PC-3 (cell line): ENCODE measurements at regions of chr9 and their contacts with region 1.

Region 1: GRCh38 chr9:35258676-35259474 is 97.1 kb downstream of the UNC13B start:
- DNase-seq: peak; percentile 66
- ATAC-seq: peak; percentile 53
- H3K4me3 ChIP-seq: no peak overlapping the region
- H3K27ac ChIP-seq: no peak overlapping the region
- H3K4me1 ChIP-seq: no peaks in the 10 kb centered on the region
- H3K27me3 ChIP-seq: no peaks in the 10 kb centered on the region
- CTCF ChIP-seq: peak; percentile 75

Region 2: DNA sequence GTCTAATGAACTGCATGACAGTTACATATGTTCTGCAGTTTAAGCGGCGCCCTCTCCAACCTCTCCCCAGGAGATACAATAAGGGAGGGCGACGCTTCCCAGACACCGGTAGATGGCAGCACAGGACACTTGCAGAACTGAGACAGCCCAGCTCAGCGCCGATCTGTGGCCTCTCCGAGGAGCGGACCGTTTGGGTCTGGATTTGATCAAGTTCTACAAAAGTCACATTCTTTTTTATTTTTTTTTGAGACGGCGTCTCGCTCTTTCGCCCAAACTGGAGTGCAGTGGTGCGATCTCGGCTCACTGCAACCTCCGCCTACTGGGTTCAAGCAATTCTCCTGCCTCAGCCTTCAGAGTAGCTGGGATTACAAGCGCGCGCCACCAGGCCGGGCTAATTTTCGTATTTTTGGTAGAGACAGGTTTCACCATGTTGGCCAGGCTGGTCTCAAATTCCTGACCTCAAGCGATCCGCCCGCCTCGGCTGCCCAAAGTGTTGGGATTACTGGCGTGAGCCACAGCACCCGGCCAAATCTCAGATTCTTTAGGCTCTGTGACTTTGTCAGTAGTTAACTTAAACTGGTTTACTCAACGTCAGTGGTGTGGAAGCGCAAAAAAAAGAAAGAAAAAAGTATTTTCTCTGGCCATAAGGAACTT is 141.8 kb before region 1 on chr9:
- CTCF ChIA-PET with region 1: interaction called, 11 read pairs
- POLR2A ChIA-PET with region 1: no interaction called
- intact Hi-C with region 1: loop called (anchors 1 kb)
- DNase-seq: peak; percentile 89
- ATAC-seq: peak; percentile 53
- H3K4me3 ChIP-seq: peak overlapping the region; percentile 83
- H3K27ac ChIP-seq: peak overlapping the region; percentile 36
- H3K4me1 ChIP-seq: peaks cover 32% of the 10 kb centered on the region
- H3K27me3 ChIP-seq: no peaks in the 10 kb centered on the region
- CTCF ChIP-seq: peak; percentile 87

Region 3: GRCh38 chr9:35414889-35415288 is 156.0 kb after region 1 on chr9:
- CTCF ChIA-PET with region 1: interaction called, 10 read pairs
- POLR2A ChIA-PET with region 1: no interaction called
- intact Hi-C with region 1: no loop called
- DNase-seq: no peak
- ATAC-seq: no peak
- H3K4me3 ChIP-seq: no peak overlapping the region
- H3K27ac ChIP-seq: no peak overlapping the region
- H3K4me1 ChIP-seq: no peaks in the 10 kb centered on the region
- H3K27me3 ChIP-seq: no peaks in the 10 kb centered on the region
- CTCF ChIP-seq: no peak

Region 4: DNA sequence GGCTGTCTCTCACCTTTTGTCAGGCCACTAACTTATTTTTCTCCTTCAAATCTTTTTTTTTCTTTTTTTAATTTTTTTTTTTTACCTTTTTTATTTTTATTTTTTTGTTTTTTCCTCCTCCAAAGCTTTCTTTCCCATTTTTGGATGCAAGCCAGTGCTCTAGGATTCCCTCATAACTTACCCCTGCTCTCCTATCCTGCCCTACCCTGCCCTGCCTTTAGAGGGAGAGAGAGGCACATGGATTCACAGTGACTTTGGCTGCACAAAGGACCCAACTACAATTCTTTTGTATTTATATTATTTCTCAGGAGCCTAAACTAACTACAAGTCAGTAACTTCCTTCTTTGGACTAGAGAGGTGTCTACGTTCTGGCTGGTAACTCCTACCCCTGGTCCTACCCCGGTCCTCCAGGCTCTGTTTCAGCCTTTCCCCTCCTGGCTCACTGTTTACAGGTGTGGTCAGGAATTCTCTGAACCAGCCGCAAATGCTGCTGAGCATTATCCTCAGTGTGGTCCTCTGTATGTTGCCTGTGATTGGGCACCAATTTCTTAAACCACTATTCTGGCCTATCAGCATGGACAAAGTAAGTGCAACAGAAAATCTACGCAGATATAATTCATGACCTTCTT is 222.6 kb after region 1 on chr9:
- CTCF ChIA-PET with region 1: no interaction called
- POLR2A ChIA-PET with region 1: no interaction called
- intact Hi-C with region 1: loop called (anchors 1 kb)
- DNase-seq: peak; percentile 74
- ATAC-seq: peak; percentile 54; the same call in 1 of the 2 replicates
- H3K4me3 ChIP-seq: no peak overlapping the region
- H3K27ac ChIP-seq: no peak overlapping the region
- H3K4me1 ChIP-seq: peaks cover 6% of the 10 kb centered on the region; the same call in 1 of the 2 replicates
- H3K27me3 ChIP-seq: no peaks in the 10 kb centered on the region
- CTCF ChIP-seq: peak; percentile 74

Region 5: GRCh38 chr9:35603987-35604577 is 345.2 kb after region 1 on chr9:
- CTCF ChIA-PET with region 1: interaction called, 11 read pairs
- POLR2A ChIA-PET with region 1: no interaction called
- intact Hi-C with region 1: no loop called
- DNase-seq: peak; percentile 98
- ATAC-seq: peak; percentile 88
- H3K4me3 ChIP-seq: peak overlapping the region; percentile 69
- H3K27ac ChIP-seq: peak overlapping the region; percentile 51
- H3K4me1 ChIP-seq: peaks cover 16% of the 10 kb centered on the region
- H3K27me3 ChIP-seq: no peaks in the 10 kb centered on the region
- CTCF ChIP-seq: peak; percentile 80